Transverse colon (tissue), 4 donors: ENCODE measurements at regions of chr14 and their contacts with region 1.

Region 1: DNA sequence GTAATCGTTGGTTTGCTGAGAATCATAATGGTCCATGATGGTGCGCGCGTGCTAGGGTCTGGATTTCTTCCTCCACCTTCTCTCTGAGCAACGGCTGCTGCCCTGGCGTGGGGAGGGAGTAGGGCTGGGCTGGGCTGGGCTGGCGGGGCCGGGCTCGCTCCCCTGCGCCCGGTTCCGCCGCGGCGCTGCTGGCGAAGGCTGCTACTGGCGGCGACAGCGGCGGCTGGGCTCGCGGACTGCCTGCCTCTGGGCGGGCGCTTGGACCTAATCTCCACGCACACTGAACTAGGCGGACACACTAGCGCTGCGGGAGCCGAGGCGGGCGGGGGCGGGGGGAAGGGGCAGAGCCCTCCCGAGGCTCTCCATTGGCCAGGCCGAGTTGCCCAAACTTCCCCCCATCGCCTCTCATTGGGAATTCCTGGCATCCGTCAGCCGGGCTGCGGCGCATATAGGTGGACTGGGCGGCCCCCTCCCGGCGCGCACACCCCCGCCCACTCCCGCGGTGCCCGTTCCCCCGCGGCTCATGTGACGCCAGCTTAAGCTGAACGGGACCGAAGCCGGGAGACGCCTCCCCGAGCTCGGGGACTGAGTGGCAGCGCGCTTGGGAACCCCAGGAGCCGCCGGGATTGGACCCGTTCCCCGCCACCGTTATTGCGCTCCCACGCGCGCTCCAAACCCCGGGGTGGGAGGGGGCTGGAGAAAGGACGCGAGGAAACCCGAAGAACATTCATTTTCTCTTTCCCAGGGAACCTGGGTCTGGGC is at the start of gene ACTN1:
- DNase-seq: peak; percentile 91
- H3K4me3 ChIP-seq: peak within 1 kb of the TSS; percentile 71 to 99 (median 78)
- H3K27ac ChIP-seq: peak within 1 kb of the TSS; percentile 93 to 99 (median 96)
- H3K4me1 ChIP-seq: peaks cover 6 to 51% (median 38%) of the 10 kb centered on the region in 4 donors
- H3K27me3 ChIP-seq: no peaks in the 10 kb centered on the region
- CTCF ChIP-seq: no peak
- EP300 ChIP-seq: peak; percentile 8
- POLR2A ChIP-seq: peak; percentile 86
- total RNA-seq, gene ACTN1: 127 to 403 (median 197) TPM

Region 2: GRCh38 chr14:67151131-67151569 is 1828.1 kb before region 1 on chr14:
- in situ Hi-C with region 1: no loop called
- intact Hi-C with region 1: loop called (anchors 10 kb)
- DNase-seq: no peak
- H3K4me3 ChIP-seq: no peak overlapping the region
- H3K27ac ChIP-seq: no peak overlapping the region
- H3K4me1 ChIP-seq: no peaks in the 10 kb centered on the region
- H3K27me3 ChIP-seq: no peaks in the 10 kb centered on the region
- CTCF ChIP-seq: peak in 1 of 5 experiments; percentile 10
- EP300 ChIP-seq: no peak
- POLR2A ChIP-seq: no peak

Region 3: GRCh38 chr14:68926236-68926635 is 53.0 kb before region 1 on chr14:
- in situ Hi-C with region 1: no loop called
- intact Hi-C with region 1: loop called (anchors 5 kb)
- DNase-seq: no peak
- H3K4me3 ChIP-seq: no peak overlapping the region
- H3K27ac ChIP-seq: peak overlapping the region; percentile 69 to 99 (median 96)
- H3K4me1 ChIP-seq: peaks cover 21 to 56% (median 35%) of the 10 kb centered on the region in 4 donors
- H3K27me3 ChIP-seq: no peaks in the 10 kb centered on the region
- CTCF ChIP-seq: peak in 3 of 5 experiments; percentile 18 to 33 (median 18)
- EP300 ChIP-seq: no peak
- POLR2A ChIP-seq: no peak

Region 4: GRCh38 chr14:68939893-68940613 is 39.1 kb before region 1 on chr14:
- in situ Hi-C with region 1: no loop called
- intact Hi-C with region 1: loop called (anchors 5 kb)
- DNase-seq: peak; percentile 67
- H3K4me3 ChIP-seq: no peak overlapping the region
- H3K27ac ChIP-seq: peak overlapping the region; percentile 93 to 99 (median 96)
- H3K4me1 ChIP-seq: peaks cover 55 to 98% (median 91%) of the 10 kb centered on the region in 4 donors
- H3K27me3 ChIP-seq: no peaks in the 10 kb centered on the region
- CTCF ChIP-seq: no peak
- EP300 ChIP-seq: peak; percentile 9
- POLR2A ChIP-seq: no peak

Region 5: GRCh38 chr14:68952531-68953195 is 26.5 kb before region 1 on chr14:
- in situ Hi-C with region 1: no loop called
- intact Hi-C with region 1: loop called (anchors 2 kb)
- DNase-seq: no peak
- H3K4me3 ChIP-seq: peak overlapping the region in 2 of 4 donors; percentile 7 to 13
- H3K27ac ChIP-seq: peak overlapping the region; percentile 93 to 99 (median 96)
- H3K4me1 ChIP-seq: peaks cover 66 to 95% (median 78%) of the 10 kb centered on the region in 4 donors
- H3K27me3 ChIP-seq: no peaks in the 10 kb centered on the region
- CTCF ChIP-seq: no peak
- EP300 ChIP-seq: no peak
- POLR2A ChIP-seq: no peak

Region 6: GRCh38 chr14:69017706-69018105 is 38.5 kb after region 1 on chr14:
- in situ Hi-C with region 1: no loop called
- intact Hi-C with region 1: no loop called
- DNase-seq: no peak
- H3K4me3 ChIP-seq: no peak overlapping the region
- H3K27ac ChIP-seq: no peak overlapping the region
- H3K4me1 ChIP-seq: peaks cover 6 to 16% (median 10%) of the 10 kb centered on the region in 4 donors
- H3K27me3 ChIP-seq: no peaks in the 10 kb centered on the region
- CTCF ChIP-seq: no peak
- EP300 ChIP-seq: no peak
- POLR2A ChIP-seq: no peak

Region 7: DNA sequence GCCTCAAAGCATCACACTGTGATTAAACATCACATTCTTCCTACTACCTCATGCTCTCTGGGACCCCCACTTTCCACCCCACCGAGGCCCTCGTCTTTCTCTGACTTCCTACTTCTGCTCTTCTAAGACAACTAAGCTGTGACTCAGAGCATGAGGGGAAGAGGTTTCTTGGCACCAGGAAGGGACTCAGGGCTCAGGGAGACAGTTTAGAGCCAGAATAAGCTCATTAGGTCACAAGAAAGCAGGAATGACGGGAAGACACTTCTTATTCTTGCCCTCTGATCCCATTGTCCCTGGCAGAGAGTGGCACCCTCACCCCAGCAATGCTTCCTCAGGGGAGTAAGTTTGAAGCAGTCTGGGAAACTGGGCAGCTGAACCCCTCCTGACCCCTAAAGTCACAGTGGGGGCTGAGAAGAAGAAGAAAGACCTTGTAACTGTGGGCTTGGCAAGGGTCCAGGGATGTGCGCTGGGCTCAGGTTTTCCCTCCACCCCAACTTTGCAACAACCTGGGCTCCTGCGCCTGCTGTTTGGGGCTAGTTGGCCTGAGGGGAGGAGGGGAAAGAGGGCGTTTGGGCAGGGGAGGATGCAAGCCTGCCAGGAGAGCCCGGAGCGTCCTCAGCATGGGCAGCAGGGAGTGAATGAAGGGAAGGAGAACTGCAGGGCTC is 64.5 kb after region 1 on chr14:
- in situ Hi-C with region 1: no loop called
- intact Hi-C with region 1: loop called (anchors 10 kb)
- DNase-seq: no peak
- H3K4me3 ChIP-seq: no peak overlapping the region
- H3K27ac ChIP-seq: peak overlapping the region; percentile 52 to 72 (median 69)
- H3K4me1 ChIP-seq: peaks cover 16 to 54% (median 44%) of the 10 kb centered on the region in 4 donors
- H3K27me3 ChIP-seq: no peaks in the 10 kb centered on the region
- CTCF ChIP-seq: no peak
- EP300 ChIP-seq: no peak
- POLR2A ChIP-seq: no peak

Region 8: GRCh38 chr14:69090187-69090789 is 111.1 kb after region 1 on chr14:
- in situ Hi-C with region 1: no loop called
- intact Hi-C with region 1: loop called (anchors 5 kb)
- DNase-seq: peak; percentile 15
- H3K4me3 ChIP-seq: no peak overlapping the region
- H3K27ac ChIP-seq: peak overlapping the region; percentile 76 to 84 (median 78)
- H3K4me1 ChIP-seq: peaks cover 2 to 33% (median 7%) of the 10 kb centered on the region in 4 donors
- H3K27me3 ChIP-seq: no peaks in the 10 kb centered on the region
- CTCF ChIP-seq: peak; percentile 51 to 65 (median 58)
- EP300 ChIP-seq: no peak
- POLR2A ChIP-seq: no peak